GM12878 (cell line): ENCODE measurements at regions of chr13 and their contacts with region 1.

Region 1: DNA sequence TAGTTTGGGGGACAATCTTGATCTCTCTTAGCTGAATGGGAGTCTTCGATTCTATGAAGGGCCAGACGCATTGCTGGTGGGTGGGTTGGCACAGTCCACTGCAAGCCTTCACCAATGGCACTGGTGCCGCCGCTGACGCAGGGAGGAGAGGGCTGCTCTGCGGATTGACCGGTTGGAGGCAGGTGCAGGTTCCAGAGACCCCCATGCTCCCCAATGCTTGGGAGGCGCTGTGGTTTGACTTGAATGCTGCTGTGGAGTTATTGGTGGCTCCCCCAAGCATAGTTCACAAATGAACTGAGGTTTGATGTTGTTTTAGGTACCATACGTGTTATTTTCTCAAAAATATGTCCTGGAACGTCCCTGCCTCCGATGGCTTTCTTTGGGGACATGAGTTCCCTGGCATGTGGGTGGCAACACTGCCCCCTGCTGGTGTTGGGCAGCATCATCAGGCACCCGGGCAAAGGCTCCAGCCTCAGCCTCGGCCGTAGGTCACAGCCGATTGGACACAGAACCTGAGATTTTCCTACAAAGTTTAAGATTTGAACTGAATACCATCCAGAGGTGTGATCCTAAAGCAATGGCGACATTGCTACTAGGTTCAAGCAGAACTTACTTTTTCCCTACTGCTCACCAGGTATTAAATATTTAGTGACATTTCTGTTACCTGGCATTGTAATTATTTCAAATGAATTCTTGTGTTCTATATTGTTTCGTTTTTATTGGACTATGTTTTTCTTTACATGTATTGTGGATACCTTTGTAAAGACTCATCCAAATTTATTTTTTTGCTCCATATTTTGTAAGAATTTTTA is 95.5 kb downstream of the ANKRD10 start:
- DNase-seq: peak; percentile 39
- ATAC-seq: peak; percentile 96
- H3K4me3 ChIP-seq: no peak overlapping the region
- H3K27ac ChIP-seq: no peak overlapping the region
- H3K4me1 ChIP-seq: 0 out of 2 replicates have a peak, but pooled peaks cover 5% of the 10 kb centered on the region
- H3K27me3 ChIP-seq: no peaks in the 10 kb centered on the region
- CTCF ChIP-seq: peak; percentile 96 to 97 (median 97)
- EP300 ChIP-seq: no peak
- POLR2A ChIP-seq: no peak
- RAD21 ChIP-seq: peak; percentile 90

Region 2: GRCh38 chr13:110218581-110219201 is 600.7 kb before region 1 on chr13:
- CTCF ChIA-PET with region 1: interaction called, 3 read pairs
- POLR2A ChIA-PET with region 1: no interaction called
- RAD21 ChIA-PET with region 1: interaction called, 3 read pairs
- SMC1A ChIA-PET with region 1: no interaction called
- in situ Hi-C with region 1: loop called (anchors 10 kb)
- intact Hi-C with region 1: loop called (anchors 5 kb)
- DNase-seq: no peak
- ATAC-seq: no peak
- H3K4me3 ChIP-seq: no peak overlapping the region
- H3K27ac ChIP-seq: no peak overlapping the region
- H3K4me1 ChIP-seq: no peaks in the 10 kb centered on the region
- H3K27me3 ChIP-seq: peaks cover 0 to 3% of the 10 kb centered on the region in 2 experiments; a peak in 2 of 4 replicates
- CTCF ChIP-seq: no peak
- EP300 ChIP-seq: no peak
- POLR2A ChIP-seq: no peak
- RAD21 ChIP-seq: no peak

Region 3: DNA sequence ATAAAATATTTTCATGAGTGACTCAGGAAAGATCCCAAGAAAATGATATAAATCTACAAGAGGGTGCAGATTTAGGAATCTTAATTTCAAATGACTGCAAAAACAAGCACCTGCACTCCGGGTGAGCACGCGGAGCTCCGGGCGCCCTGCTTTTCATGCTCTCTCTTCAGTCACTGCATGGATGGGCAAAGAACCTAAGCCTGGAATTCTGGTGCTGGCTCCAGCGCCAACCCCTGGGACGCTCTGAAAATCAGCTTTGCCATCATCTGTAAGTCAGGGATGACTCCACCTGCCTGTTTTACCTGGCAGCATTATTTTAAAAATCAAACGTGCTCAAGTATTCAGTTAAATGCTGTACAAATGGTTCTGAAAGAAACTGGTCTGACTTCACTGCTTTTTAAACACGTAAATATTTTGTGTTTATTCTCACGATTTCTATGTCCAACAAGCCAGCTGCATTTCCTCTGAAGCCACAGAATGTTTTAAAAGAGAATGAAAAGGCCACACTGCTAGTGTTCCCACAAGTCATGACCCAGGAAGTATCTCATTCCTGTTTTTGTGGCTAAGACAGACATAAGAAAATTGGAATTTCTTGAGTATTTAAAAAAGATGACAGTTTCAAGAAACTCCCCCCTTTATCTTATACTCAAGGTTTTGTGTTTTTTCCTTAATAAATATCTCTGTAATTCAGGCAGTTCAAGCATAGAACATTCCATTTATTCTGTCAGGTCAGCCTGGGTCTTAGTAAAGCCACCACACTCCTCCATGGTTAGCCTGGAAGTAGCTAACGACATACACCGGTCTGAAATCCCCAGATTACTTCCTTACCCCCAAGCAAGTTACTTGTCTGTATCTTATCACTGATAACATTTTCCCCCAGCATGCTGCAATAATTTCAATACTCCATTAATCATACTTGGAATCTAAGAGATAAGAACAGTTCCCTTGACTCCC is 593.5 kb before region 1 on chr13:
- CTCF ChIA-PET with region 1: interaction called, 5 read pairs
- POLR2A ChIA-PET with region 1: no interaction called
- RAD21 ChIA-PET with region 1: interaction called, 3 read pairs
- SMC1A ChIA-PET with region 1: no interaction called
- in situ Hi-C with region 1: loop called (anchors 10 kb)
- intact Hi-C with region 1: loop called (anchors 5 kb)
- DNase-seq: no peak
- ATAC-seq: no peak
- H3K4me3 ChIP-seq: no peak overlapping the region
- H3K27ac ChIP-seq: no peak overlapping the region
- H3K4me1 ChIP-seq: no peaks in the 10 kb centered on the region
- H3K27me3 ChIP-seq: no peaks in the 10 kb centered on the region; a peak in 1 of 4 replicates
- CTCF ChIP-seq: no peak
- EP300 ChIP-seq: no peak
- POLR2A ChIP-seq: no peak
- RAD21 ChIP-seq: no peak

Region 4: DNA sequence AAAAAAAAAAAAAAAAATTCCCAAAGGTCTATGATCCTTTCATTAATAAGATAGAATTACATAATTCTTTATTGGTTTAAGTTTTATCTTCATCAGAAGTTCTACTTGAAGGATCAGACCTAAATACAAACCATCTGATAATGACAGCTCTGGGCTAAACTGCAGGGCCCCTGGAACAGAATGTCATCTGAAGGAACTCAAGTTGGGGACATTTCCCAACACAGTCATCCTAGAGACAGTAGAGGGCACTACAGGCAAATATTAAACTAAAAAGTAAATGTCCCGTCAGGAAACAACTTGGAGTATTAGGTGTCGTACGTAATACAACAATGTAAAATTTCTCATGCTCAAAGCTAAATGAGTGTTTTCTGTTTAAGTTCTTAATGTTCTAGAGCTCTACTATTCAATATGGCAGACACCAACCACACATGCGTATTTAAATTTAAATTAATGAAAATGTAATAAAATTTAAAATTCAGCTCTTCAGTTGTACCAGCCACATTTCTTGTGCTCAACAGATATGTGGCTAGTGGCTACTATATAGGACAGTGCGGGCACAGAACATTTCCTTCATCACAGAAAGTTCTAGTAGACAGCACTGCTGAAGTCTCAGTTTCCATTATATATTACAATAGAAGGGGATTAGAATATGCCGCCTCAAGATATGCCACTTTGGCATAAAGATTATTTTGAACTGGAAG is 225.8 kb before region 1 on chr13:
- CTCF ChIA-PET with region 1: interaction called, 82 read pairs
- POLR2A ChIA-PET with region 1: no interaction called
- RAD21 ChIA-PET with region 1: interaction called, 20 read pairs
- SMC1A ChIA-PET with region 1: interaction called, 50 read pairs
- in situ Hi-C with region 1: loop called (anchors 5 kb)
- intact Hi-C with region 1: loop called (anchors 1 kb)
- DNase-seq: no peak
- ATAC-seq: peak; percentile 97
- H3K4me3 ChIP-seq: no peak overlapping the region
- H3K27ac ChIP-seq: no peak overlapping the region
- H3K4me1 ChIP-seq: no peaks in the 10 kb centered on the region
- H3K27me3 ChIP-seq: no peaks in the 10 kb centered on the region
- CTCF ChIP-seq: peak; percentile 60 to 71 (median 66)
- EP300 ChIP-seq: no peak
- POLR2A ChIP-seq: no peak
- RAD21 ChIP-seq: peak; percentile 86

Region 5: DNA sequence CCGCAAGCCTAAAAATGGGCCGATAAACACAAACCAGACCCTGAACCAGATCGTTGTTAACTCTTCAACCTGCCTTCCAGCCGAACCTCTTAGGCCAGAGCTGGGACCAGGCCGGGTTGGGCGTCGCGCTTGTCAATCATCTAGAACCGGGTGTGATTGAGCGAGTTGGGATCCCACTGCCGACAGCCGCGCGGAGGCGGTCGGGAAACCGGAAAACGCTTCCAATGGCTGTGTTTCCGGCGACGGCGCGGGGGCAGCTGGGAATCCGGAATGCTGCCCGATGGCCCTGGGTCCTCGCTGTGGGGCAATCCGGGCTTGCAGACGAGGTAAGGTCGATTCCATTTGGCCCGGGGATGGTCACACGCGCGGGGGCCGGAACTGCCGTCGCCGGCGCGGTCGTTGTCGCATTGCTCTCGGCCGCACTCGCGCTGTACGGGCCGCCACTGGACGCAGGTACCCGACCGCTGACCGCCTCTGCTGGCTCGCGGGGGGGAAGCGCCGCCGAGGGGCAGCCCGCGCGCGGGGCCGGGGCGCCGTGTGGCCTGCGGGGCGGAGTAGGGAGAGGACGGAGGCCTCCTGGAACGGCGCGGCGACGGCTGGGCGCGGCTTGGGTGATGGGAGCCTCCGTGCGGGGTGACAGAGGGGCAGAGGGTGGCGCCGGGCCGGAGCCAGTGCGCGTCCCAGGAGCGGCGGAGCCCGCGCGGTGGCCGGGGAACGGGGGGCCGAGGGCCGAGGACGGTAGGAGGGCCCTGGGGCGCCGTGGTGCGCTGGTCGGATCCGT is 203.9 kb before region 1 on chr13 and contains the start of gene NAXD:
- CTCF ChIA-PET with region 1: interaction called, 19 read pairs
- POLR2A ChIA-PET with region 1: no interaction called
- RAD21 ChIA-PET with region 1: interaction called, 22 read pairs
- SMC1A ChIA-PET with region 1: interaction called, 7 read pairs
- in situ Hi-C with region 1: no loop called
- intact Hi-C with region 1: no loop called
- DNase-seq: peak; percentile 62
- ATAC-seq: peak; percentile 87
- H3K4me3 ChIP-seq: peak within 1 kb of the TSS; percentile 63
- H3K27ac ChIP-seq: peak within 1 kb of the TSS; percentile 86
- H3K4me1 ChIP-seq: peaks cover 20% of the 10 kb centered on the region
- H3K27me3 ChIP-seq: no peaks in the 10 kb centered on the region
- CTCF ChIP-seq: no peak
- EP300 ChIP-seq: no peak
- POLR2A ChIP-seq: peak; percentile 83
- RAD21 ChIP-seq: no peak
- polyA plus RNA-seq, gene NAXD: 1.5 to 5.0 TPM

Region 6: GRCh38 chr13:110644892-110645521 is 174.4 kb before region 1 on chr13:
- CTCF ChIA-PET with region 1: interaction called, 19 read pairs
- POLR2A ChIA-PET with region 1: interaction called, 4 read pairs
- RAD21 ChIA-PET with region 1: interaction called, 8 read pairs
- SMC1A ChIA-PET with region 1: interaction called, 12 read pairs
- in situ Hi-C with region 1: no loop called
- intact Hi-C with region 1: loop called (anchors 2 kb)
- DNase-seq: no peak
- ATAC-seq: peak; percentile 87
- H3K4me3 ChIP-seq: no peak overlapping the region
- H3K27ac ChIP-seq: no peak overlapping the region; the same call in 1 of the 2 replicates
- H3K4me1 ChIP-seq: 0 out of 2 replicates have a peak, but pooled peaks cover 3% of the 10 kb centered on the region
- H3K27me3 ChIP-seq: no peaks in the 10 kb centered on the region
- CTCF ChIP-seq: peak; percentile 46 to 54 (median 48); a peak in 5 of 6 replicates
- EP300 ChIP-seq: no peak
- POLR2A ChIP-seq: peak; percentile 37; the same call in 1 of the 2 replicates
- RAD21 ChIP-seq: peak; percentile 86

Region 7: DNA sequence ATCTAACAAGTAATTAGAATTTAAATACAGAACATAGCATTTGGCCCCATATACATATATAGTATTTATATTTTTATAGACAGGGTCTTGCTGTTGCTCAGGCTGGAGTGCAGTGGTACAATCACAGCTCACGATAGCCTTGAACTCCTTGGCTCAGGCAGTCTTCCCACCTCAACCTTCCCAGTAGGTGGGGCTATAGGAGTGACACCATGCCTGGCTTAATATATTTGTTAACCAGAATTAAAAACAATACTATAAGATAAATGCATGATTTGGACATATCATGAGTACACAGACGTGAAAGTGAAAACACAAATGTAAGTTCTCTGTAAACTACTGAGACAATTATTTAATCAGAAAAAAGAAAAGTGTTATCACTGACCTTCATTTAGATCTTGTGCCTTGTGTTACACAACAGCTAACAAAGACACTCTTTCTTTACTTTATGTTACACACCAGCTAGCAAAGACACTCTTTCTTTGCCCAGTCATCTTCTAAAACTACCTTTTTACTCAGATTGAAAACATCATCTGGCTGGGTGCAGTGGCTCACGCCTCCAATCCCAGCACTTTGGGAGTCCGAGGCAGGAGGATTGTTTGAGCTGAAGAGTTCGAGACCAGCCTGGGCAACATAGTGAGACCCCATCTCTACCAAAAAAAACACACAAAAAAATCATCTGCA is 136.1 kb before region 1 on chr13:
- CTCF ChIA-PET with region 1: interaction called, 17 read pairs
- POLR2A ChIA-PET with region 1: interaction called, 4 read pairs
- RAD21 ChIA-PET with region 1: interaction called, 4 read pairs
- SMC1A ChIA-PET with region 1: interaction called, 9 read pairs
- in situ Hi-C with region 1: no loop called
- intact Hi-C with region 1: no loop called
- DNase-seq: no peak
- ATAC-seq: peak; percentile 48; the same call in 2 of the 3 replicates
- H3K4me3 ChIP-seq: no peak overlapping the region
- H3K27ac ChIP-seq: no peak overlapping the region
- H3K4me1 ChIP-seq: no peaks in the 10 kb centered on the region
- H3K27me3 ChIP-seq: no peaks in the 10 kb centered on the region
- CTCF ChIP-seq: peak; percentile 28 to 36 (median 30); a peak in 4 of 6 replicates
- EP300 ChIP-seq: no peak
- POLR2A ChIP-seq: no peak
- RAD21 ChIP-seq: peak; percentile 39; the same call in 1 of the 2 replicates

Region 8: DNA sequence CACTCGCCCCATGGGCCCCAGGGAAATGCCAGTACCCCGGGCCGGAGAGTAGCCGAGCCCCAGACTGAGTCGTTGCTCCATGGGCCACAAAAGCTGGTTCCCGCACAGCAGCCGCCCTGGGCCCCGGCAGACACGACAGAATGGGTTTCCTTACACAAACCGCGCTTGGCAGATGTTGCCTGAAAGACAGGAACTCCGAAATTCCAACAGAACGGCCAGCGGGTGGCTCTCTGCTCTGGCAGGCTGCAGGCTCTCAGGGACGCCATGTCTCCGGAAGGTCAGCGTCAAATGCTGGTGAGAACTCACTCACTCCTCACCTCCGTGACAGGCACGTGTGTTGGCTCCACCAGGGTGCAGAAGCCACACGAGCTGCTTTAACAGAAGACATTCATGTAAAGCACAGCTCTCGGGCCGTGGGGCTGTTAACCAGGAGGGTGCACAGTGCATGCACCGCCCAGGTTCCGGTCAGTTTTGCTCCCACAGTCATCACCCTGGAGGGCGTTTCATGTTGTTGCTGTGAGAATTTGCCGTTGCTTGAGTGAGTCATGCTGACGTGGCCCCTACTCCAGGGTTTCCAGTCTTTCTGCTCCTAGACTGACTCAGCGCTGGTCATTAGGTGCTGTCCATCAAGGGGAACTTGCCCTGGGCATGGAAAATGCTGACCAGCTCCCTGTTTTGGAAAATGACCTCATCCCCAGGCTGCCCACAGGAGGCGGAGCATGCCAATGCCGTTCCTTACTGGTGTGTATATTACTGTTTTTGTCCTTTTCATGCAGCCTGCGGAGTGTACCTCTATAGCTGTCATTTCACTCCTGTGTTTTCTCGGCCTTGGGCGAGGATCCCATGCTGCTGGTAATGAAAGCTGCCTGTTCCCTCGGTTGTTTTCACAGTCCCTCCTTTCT is 50.6 kb after region 1 on chr13:
- CTCF ChIA-PET with region 1: no interaction called
- POLR2A ChIA-PET with region 1: no interaction called
- RAD21 ChIA-PET with region 1: no interaction called
- SMC1A ChIA-PET with region 1: no interaction called
- in situ Hi-C with region 1: no loop called
- intact Hi-C with region 1: no loop called
- DNase-seq: no peak
- ATAC-seq: peak; percentile 37
- H3K4me3 ChIP-seq: no peak overlapping the region
- H3K27ac ChIP-seq: no peak overlapping the region
- H3K4me1 ChIP-seq: no peaks in the 10 kb centered on the region
- H3K27me3 ChIP-seq: no peaks in the 10 kb centered on the region
- CTCF ChIP-seq: no peak
- EP300 ChIP-seq: no peak
- POLR2A ChIP-seq: no peak
- RAD21 ChIP-seq: no peak

Region 9: DNA sequence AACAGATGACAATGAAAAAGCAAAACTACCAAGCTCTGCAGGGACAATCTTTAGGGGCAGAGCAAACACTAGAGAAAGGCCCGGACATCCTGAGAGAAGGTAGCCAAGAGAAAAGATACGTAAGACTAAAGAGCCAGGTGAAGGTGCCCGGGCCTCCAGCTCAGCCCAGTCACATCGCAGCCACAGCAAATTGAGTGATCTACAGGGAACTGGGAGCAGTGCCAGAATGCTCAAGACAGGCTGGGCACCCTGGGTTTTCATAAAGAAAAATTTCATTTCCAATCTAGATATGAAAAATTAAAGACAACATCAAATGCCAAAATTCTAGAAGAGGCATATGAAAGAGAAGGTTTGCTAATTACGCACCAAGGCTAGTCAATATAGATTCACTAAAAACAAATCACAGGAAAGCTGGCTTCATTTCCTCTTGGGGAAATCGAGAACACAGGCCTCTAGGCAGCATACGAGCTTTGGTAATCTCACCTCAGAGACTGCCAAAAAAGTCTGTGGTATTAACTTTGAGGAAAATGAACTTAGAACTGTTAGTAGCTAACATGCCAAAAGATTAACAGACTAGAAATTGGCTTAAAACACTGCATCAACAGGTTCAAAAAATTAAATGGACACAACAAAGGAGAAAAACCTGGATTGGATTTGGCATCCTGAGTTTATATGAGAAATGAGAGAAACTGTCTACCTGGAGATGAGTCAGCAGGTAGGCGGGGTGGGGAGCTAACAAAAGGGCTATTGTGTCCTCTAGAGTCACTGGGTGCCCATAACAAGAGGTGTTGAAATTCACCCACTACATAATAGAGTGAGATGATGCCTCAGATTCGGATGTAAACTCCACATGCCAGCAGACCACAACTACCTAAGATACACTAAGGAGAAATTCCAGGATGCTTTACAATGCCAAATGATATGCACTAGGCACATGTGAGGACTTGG is 88.8 kb after region 1 on chr13:
- CTCF ChIA-PET with region 1: no interaction called
- POLR2A ChIA-PET with region 1: no interaction called
- RAD21 ChIA-PET with region 1: no interaction called
- SMC1A ChIA-PET with region 1: no interaction called
- in situ Hi-C with region 1: no loop called
- intact Hi-C with region 1: no loop called
- DNase-seq: no peak
- ATAC-seq: peak; percentile 74
- H3K4me3 ChIP-seq: peak overlapping the region; percentile 20; the same call in 1 of the 2 replicates
- H3K27ac ChIP-seq: peak overlapping the region; percentile 18; the same call in 1 of the 2 replicates
- H3K4me1 ChIP-seq: peaks cover 9% of the 10 kb centered on the region; the same call in 1 of the 2 replicates
- H3K27me3 ChIP-seq: no peaks in the 10 kb centered on the region
- CTCF ChIP-seq: no peak; a peak in 1 of 6 replicates
- EP300 ChIP-seq: 0 out of 4 replicates have a peak, but pooled peaks of 1 of the 2 experiments have one; percentile 20
- POLR2A ChIP-seq: no peak
- RAD21 ChIP-seq: no peak